Caco-2 (cell line): ENCODE measurements at regions of chr12 and their contacts with region 1.

Region 1: GRCh38 chr12:132414634-132415326 is 75.2 kb upstream of the FBRSL1 start:
- DNase-seq: peak; percentile 84 to 92
- H3K4me3 ChIP-seq: no peak overlapping the region
- H3K4me3 Mint-ChIP-seq: no peak overlapping the region
- H3K27ac Mint-ChIP-seq: no peak overlapping the region
- H3K4me1 ChIP-seq: peaks cover 11% of the 10 kb centered on the region
- H3K4me1 Mint-ChIP-seq: no peaks in the 10 kb centered on the region
- H3K27me3 ChIP-seq: no peaks in the 10 kb centered on the region
- H3K27me3 Mint-ChIP-seq: peaks cover 8% of the 10 kb centered on the region
- CTCF ChIP-seq: peak; percentile 89 to 96

Region 2: DNA sequence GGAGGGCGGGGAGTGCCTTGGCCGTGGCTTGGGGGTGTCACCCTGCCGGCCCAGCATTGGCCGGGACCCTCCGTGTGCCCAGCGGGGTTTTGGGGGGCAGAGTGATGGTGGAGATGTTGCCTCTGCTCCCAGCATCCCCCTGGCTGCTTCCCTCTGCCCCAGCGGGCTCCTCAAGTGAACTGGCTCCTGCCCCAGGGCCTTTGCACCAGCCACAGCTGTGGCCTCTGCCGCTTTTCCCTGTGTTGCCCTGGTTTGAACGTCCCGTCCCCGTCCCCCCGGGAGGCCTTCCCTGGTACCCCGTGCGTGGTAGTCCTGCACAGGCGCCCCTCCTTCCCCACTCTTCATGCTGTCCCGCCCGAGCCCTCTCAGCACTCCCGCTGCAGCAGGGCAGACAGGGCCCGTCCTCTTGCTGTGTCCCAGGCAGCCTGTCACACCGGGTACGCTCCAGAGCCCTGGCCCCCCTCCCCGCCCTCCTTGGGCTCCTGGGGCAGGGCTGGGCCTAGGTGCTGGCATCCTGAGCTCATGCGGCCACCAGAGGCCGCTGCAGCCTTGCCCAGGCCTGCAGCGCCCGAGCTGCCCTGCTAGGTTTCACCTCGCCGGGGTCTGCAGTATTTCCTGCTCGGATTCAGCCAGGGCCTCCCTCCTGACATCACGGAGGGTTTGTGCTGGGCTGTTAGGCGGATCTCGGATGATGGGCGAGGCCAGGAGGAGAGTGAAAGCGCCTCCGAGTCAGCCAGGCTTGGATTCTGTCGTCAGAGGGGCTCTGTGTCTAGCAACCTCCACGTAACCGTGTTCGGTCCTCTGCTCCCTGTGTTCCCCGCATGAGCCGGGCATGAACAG is 261.1 kb before region 1 on chr12:
- CTCF ChIA-PET with region 1: interaction called, 44 read pairs
- POLR2A ChIA-PET with region 1: no interaction called
- intact Hi-C with region 1: loop called (anchors 2 kb)
- DNase-seq: peak; percentile 56 to 67
- H3K4me3 ChIP-seq: no peak overlapping the region
- H3K4me3 Mint-ChIP-seq: no peak overlapping the region
- H3K27ac Mint-ChIP-seq: no peak overlapping the region
- H3K4me1 ChIP-seq: no peaks in the 10 kb centered on the region
- H3K4me1 Mint-ChIP-seq: no peaks in the 10 kb centered on the region
- H3K27me3 ChIP-seq: no peaks in the 10 kb centered on the region
- H3K27me3 Mint-ChIP-seq: no peaks in the 10 kb centered on the region
- CTCF ChIP-seq: peak; percentile 75 to 90

Region 3: GRCh38 chr12:132189378-132190011 is 225.3 kb before region 1 on chr12:
- CTCF ChIA-PET with region 1: interaction called, 12 read pairs
- POLR2A ChIA-PET with region 1: no interaction called
- intact Hi-C with region 1: no loop called
- DNase-seq: peak; percentile 93 to 95
- H3K4me3 ChIP-seq: peak overlapping the region; percentile 55
- H3K4me3 Mint-ChIP-seq: peak overlapping the region; percentile 90
- H3K27ac Mint-ChIP-seq: peak overlapping the region; percentile 72
- H3K4me1 ChIP-seq: peaks cover 8% of the 10 kb centered on the region; the same call in 1 of the 2 replicates
- H3K4me1 Mint-ChIP-seq: peaks cover 7% of the 10 kb centered on the region
- H3K27me3 ChIP-seq: no peaks in the 10 kb centered on the region
- H3K27me3 Mint-ChIP-seq: peaks cover 8% of the 10 kb centered on the region
- CTCF ChIP-seq: no peak

Region 4: DNA sequence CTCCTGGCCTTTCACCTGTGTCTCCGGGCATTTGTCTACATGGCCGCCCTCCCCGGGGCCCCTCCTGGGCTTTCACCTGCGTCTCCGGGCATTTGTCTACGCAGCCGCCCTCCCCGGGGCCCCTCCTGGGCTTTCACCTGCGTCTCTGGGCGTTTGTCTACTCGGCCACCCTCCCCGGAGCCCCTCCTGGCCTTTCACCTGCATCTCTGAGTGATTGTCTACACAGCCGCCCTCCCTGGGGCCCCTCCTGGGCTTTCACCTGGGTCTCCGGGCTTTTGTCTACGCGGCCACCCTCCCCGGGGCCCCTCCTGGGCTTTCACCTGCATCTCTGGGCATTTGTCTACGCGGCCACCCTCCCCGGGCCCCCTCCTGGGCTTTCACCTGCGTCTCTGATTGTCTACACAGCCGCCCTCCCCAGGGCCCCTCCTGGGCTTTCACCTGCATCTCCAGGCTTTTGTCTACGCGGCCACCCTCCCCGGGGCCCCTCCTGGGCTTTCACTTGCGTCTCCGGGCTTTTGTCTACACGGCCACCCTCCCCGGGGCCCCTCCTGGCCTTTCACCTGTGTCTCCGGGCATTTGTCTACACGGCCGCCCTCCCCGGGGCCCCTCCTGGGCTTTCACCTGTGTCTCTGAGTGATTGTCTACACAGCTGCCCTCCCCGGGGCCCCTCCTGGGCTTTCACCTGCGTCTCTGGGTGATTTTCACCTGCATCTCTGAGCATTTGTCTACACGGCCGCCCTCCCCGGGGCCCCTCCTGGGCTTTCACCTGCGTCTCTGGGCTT is 17.4 kb before region 1 on chr12:
- CTCF ChIA-PET with region 1: no interaction called
- POLR2A ChIA-PET with region 1: no interaction called
- intact Hi-C with region 1: no loop called
- DNase-seq: peak; percentile 55 to 71
- H3K4me3 ChIP-seq: no peak overlapping the region
- H3K4me3 Mint-ChIP-seq: peak overlapping the region; percentile 63
- H3K27ac Mint-ChIP-seq: peak overlapping the region; percentile 75
- H3K4me1 ChIP-seq: peaks cover 11% of the 10 kb centered on the region
- H3K4me1 Mint-ChIP-seq: peaks cover 17% of the 10 kb centered on the region
- H3K27me3 ChIP-seq: no peaks in the 10 kb centered on the region
- H3K27me3 Mint-ChIP-seq: peaks cover 3% of the 10 kb centered on the region
- CTCF ChIP-seq: no peak

Region 5: DNA sequence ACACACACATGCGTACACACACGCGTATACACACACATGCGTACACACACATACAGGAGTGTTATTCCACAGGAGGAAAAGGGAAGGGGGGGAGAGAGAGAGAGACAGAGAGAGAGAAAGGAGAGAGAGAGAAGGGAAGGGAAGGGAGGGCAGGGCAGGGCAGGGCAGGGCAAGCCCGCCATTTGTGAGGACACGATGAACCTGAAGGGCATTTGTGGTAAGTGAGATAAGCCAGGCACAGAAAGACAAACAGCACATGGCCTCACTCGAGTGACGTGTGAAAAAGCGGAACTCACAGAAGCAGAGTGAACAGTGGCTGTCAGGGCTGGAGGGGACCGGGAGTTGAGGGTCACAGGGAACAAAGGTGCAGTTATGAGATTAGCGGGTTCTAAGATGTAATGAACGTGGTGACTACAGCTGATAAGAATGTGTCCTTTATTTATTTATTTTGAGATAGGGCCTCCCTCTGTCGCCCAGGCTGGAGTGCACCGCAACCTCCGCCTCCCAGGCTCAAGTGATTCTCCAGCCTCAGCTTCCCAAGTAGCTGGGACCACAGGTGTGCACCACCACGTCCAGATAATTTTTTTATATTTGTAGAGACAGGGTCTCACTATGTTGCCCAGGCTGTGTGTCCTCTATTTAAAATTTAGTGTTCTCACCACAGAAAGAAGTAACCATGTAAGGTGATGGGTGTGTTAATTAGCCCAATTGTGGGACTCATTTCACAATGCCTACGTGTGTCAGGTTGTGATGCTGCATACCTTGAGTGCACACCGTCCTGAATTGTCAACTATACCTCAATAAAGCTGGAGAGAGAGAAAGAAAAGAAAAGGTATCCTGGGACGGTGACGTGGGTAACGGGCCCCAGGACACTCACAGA is 56.4 kb after region 1 on chr12:
- CTCF ChIA-PET with region 1: no interaction called
- POLR2A ChIA-PET with region 1: no interaction called
- intact Hi-C with region 1: no loop called
- DNase-seq: peak; percentile 68 to 84
- H3K4me3 ChIP-seq: no peak overlapping the region
- H3K4me3 Mint-ChIP-seq: peak overlapping the region; percentile 56
- H3K27ac Mint-ChIP-seq: peak overlapping the region; percentile 40
- H3K4me1 ChIP-seq: peaks cover 7% of the 10 kb centered on the region
- H3K4me1 Mint-ChIP-seq: peaks cover 18% of the 10 kb centered on the region
- H3K27me3 ChIP-seq: no peaks in the 10 kb centered on the region
- H3K27me3 Mint-ChIP-seq: peaks cover 2% of the 10 kb centered on the region
- CTCF ChIP-seq: no peak

Region 6: GRCh38 chr12:132523576-132524331 is 109.0 kb after region 1 on chr12:
- CTCF ChIA-PET with region 1: interaction called, 25 read pairs
- POLR2A ChIA-PET with region 1: no interaction called
- intact Hi-C with region 1: loop called (anchors 1 kb)
- DNase-seq: peak; percentile 61 to 78
- H3K4me3 ChIP-seq: no peak overlapping the region
- H3K4me3 Mint-ChIP-seq: no peak overlapping the region
- H3K27ac Mint-ChIP-seq: no peak overlapping the region
- H3K4me1 ChIP-seq: peaks cover 12% of the 10 kb centered on the region
- H3K4me1 Mint-ChIP-seq: peaks cover 4% of the 10 kb centered on the region
- H3K27me3 ChIP-seq: no peaks in the 10 kb centered on the region
- H3K27me3 Mint-ChIP-seq: no peaks in the 10 kb centered on the region
- CTCF ChIP-seq: peak; percentile 84 to 85

Region 7: DNA sequence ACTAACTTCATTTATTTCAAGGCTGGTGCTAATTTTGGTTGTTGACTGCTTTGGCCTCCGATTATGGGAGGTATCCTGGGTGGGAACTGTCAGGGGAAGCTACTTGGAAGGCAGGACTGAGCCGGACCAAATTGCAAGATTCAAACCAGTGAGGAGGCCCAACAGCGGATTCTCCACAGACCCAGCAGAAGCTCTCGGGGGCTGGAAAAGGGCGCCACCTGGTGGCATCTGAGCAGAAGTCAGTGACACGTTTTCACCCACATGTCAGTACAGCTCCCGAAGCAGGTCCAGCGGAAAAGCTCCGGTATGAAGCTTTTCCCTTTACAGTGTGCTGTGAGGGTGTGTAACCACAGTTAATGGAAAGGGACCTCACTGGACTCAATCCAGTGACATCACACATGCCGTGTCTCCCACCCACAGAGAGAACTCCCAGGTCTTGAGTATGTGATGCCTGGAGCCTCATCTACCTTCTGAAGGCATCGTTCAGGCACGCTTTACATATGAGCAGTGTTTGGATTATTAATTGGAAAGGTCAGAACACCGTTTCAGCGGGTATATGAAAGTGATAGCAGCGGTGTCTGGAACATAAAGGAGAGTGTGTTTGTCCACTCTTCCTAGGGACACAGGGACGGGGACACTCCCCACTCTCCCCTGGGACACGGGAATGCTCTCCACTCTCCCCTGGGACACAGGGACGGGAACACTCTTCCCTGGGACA is 200.2 kb after region 1 on chr12:
- CTCF ChIA-PET with region 1: interaction called, 15 read pairs
- POLR2A ChIA-PET with region 1: no interaction called
- intact Hi-C with region 1: loop called (anchors 1 kb)
- DNase-seq: peak; percentile 81 to 83
- H3K4me3 ChIP-seq: no peak overlapping the region
- H3K4me3 Mint-ChIP-seq: no peak overlapping the region
- H3K27ac Mint-ChIP-seq: no peak overlapping the region
- H3K4me1 ChIP-seq: no peaks in the 10 kb centered on the region
- H3K4me1 Mint-ChIP-seq: peaks cover 4% of the 10 kb centered on the region
- H3K27me3 ChIP-seq: no peaks in the 10 kb centered on the region
- H3K27me3 Mint-ChIP-seq: peaks cover 2% of the 10 kb centered on the region
- CTCF ChIP-seq: peak; percentile 82 to 89